Motor neuron (in vitro differentiated cells): ENCODE measurements at regions of chr2 and their contacts with region 1.

Region 1: DNA sequence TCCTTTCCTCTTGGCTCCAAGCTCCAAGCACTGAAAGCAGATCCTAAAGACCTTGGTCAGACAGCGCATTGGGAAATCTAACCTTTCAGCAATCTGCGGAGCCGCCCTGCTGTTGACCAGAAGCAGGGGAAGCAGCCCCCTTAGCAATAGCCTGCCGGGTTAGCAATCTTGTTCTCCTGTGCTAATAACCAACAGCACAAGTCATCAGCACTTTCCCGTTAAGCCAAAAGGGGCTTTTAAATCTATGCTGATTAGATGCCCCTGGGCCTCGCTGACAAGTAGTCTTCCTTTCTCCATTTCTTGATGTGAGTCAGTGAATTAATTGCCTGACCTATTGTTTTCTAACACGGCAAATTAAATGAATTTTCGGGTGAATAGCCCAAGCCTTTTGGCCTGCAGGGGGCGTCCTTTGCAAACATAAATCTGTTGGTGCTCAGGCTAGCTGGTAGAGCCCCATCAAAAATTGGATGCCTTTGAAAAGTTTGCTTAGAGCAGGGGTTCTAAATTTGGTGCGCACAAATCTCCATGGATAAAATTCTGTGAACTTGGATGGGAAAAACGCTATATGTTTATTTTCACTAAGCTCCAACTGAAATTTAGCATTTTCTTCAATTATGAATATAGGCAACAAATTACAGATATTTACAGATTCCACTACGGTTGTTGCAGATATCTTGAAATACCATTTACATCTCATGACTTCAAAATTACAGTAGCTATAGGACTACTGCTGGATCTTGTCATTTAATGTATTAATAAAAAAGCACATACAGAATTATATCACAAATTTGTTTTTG is 24.6 kb downstream of the MAIP1 start:
- ATAC-seq: peak; percentile 59 to 90 (median 84)
- H3K4me3 ChIP-seq: peak overlapping the region in 4 of 5 donors; percentile 9 to 21 (median 18)
- H3K27ac ChIP-seq: no peak overlapping the region
- H3K4me1 ChIP-seq: peaks cover 5 to 12% of the 10 kb centered on the region in 2 donors

Region 2: DNA sequence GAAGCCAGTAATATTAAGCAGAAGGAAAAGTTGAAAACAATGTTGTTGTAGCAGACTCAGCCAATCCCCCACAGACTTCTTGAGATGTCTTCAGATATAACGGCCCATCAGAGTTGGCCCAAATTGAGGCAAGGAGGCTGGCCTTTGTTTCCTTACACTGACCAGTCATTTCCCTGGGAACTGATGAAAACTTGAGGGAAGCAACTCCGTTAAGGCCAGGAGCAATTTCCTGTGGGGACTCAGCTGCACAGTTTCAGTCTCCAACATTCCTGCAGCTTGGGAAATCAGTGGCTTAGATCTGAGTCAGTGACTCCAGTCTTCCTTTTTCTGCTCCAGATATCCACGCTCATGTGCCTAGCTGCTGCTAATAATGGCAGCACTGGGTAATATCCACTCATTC is 204.8 kb before region 1 on chr2:
- in situ Hi-C with region 1: no loop called
- ATAC-seq: no peak
- H3K4me3 ChIP-seq: no peak overlapping the region
- H3K27ac ChIP-seq: no peak overlapping the region
- H3K4me1 ChIP-seq: peaks cover 0 to 3% of the 10 kb centered on the region in 2 donors

Region 3: GRCh38 chr2:200483729-200484198 is 503.7 kb after region 1 on chr2:
- in situ Hi-C with region 1: loop called in 5 of 9 experiments (anchors 5 to 25 kb)
- ATAC-seq: peak; percentile 30 to 79 (median 52)
- H3K4me3 ChIP-seq: no peak overlapping the region
- H3K27ac ChIP-seq: no peak overlapping the region
- H3K4me1 ChIP-seq: peaks cover 0 to 2% of the 10 kb centered on the region in 2 donors

Region 4: DNA sequence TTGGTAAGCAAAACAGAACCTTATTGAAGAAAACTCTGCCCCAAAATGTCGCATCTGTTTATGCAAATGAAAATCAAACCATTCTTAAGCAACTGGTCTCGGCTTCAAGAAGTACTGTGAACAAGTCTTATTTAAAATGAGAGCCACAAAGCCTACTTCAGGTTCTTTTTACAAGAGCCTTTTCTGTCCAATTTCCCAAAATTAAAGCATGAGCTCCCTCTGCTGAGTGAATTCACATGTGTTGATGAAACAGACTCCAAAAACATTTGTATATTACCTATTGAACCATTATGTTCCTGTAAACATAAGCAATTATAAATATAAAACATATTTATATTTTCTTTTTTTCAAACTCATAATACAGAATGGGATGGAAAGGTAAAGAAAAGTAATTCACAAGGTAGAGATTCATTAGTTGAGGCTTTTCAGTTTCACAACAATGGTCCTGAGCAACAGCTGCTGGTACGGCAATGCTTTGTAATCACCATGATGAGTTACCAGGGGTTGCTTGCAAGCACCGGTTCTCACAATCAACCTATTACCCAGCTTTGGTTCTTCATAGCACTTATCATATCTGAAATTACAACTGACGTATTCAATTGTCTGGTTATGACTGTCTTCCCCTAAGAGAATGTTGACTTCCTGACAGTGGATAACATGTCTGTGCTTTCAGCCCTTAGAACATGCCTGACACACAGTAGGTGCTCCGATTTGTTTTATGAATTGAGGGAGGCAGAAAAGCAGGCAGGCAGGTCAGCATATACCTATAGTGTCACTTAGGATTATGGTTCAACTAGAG is 723.3 kb after region 1 on chr2:
- in situ Hi-C with region 1: loop called in 2 of 9 experiments (anchors 10 to 25 kb)
- ATAC-seq: peak in 4 of 8 experiments; percentile 43 to 67 (median 58)
- H3K4me3 ChIP-seq: no peak overlapping the region
- H3K27ac ChIP-seq: no peak overlapping the region
- H3K4me1 ChIP-seq: peaks cover under 1 to 7% of the 10 kb centered on the region in 2 donors